Sigmoid colon (tissue), 7 donors: ENCODE measurements at regions of chr18 and their contacts with region 1.

Region 1: DNA sequence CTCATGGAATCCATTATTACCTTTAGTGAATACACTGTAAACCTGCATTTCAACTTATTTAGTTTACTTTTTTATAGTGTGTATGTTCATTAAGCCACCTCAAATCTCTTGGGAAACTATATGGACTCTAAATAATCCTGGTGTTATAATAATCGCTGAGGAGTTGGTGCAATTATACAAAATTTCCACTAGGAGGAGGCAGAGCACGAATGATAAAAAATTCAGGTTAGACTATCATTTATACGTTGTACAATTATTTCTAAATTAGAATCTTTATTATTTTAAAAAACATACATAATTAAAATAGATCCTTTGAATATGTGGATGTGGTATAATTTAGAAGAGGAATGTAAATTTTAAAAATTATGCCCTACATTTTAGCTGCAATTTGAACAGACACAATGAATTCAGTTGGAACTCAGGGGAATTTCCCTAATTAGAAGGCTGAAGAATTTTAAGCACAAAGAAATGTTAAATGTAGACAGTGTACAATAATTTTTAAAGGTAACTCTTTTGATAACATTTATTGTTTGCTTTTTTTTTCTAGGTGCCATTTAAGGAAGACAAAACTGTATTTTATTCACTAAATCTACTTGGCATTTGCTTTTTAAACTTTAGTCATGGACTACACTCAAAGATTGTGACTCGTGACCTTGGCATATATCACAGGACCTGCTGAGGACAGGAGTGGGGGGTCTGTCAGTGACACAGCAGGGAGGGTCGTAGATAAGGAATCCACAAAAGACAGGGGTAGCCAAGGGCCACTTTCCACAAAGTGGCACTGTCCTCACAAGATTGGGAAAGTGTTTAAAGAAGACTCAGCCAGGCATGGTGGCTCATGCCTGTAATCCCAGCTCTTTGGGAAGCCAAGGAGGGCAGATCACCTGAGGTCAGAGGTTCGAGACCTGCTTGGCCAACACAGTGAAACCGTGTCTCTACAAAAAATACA is 45.5 kb downstream of the RAB12 start:
- DNase-seq: no peak
- H3K4me3 ChIP-seq: no peak overlapping the region
- H3K27ac ChIP-seq: no peak overlapping the region
- H3K4me1 ChIP-seq: no peaks in the 10 kb centered on the region
- H3K27me3 ChIP-seq: no peaks in the 10 kb centered on the region
- CTCF ChIP-seq: peak; percentile 52 to 83 (median 80)
- EP300 ChIP-seq: no peak
- POLR2A ChIP-seq: no peak

Region 2: DNA sequence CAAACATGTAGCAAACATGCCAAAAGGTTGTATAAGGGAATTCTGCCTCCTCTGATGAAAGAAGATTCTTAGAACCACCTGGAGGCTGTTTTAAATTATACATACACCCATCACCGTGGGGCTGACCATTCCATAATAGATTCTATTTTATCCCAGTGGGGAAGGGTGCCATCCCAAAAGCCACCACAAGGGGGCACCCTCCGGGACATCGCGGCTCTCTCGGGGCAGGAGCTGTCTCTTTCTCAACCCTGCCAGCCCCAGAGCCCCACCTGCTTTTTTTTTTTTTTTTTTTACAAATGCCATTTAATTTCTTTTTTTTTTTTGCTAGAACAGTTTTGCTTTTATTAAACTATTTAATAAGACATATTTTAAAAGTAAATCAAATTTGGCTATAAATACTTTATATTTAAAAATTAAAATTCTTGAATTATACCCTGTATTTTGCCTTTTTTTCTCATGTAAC is 42.0 kb after region 1 on chr18:
- intact Hi-C with region 1: loop called (anchors 5 kb)
- DNase-seq: peak; percentile 88
- H3K4me3 ChIP-seq: no peak overlapping the region
- H3K27ac ChIP-seq: peak overlapping the region in 1 of 4 donors; percentile 9
- H3K4me1 ChIP-seq: peaks cover 0 to 5% (median 4%) of the 10 kb centered on the region in 4 donors
- H3K27me3 ChIP-seq: no peaks in the 10 kb centered on the region
- CTCF ChIP-seq: peak; percentile 68 to 90 (median 83)
- EP300 ChIP-seq: no peak
- POLR2A ChIP-seq: no peak

Region 3: GRCh38 chr18:8794133-8794986 is 139.6 kb after region 1 on chr18:
- intact Hi-C with region 1: no loop called
- DNase-seq: no peak
- H3K4me3 ChIP-seq: no peak overlapping the region
- H3K27ac ChIP-seq: peak overlapping the region in 3 of 4 donors; percentile 80 to 93 (median 82)
- H3K4me1 ChIP-seq: peaks cover 0 to 75% (median 53%) of the 10 kb centered on the region in 4 donors
- H3K27me3 ChIP-seq: no peaks in the 10 kb centered on the region
- CTCF ChIP-seq: no peak
- EP300 ChIP-seq: no peak
- POLR2A ChIP-seq: no peak

Region 4: DNA sequence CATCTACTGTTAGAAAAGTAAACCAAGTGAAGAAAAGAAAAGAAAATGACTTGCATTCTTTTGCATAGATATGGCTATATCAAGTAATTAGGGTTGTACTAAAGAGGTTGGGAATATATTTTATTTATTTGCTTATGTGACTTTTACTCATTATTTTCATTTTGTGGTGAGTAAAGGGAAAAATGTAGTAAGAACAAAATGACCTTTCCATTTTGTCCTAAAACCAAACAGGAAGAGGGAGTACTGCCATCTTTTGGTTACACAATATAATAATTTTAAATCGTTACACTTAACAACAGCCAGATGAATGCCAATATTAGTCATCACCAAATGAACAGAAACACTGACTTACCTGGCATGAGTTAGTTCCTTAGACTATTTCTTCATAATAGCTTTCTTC is 400.4 kb after region 1 on chr18:
- intact Hi-C with region 1: loop called (anchors 5 kb)
- DNase-seq: no peak
- H3K4me3 ChIP-seq: no peak overlapping the region
- H3K27ac ChIP-seq: peak overlapping the region in 1 of 4 donors; percentile 10
- H3K4me1 ChIP-seq: peaks cover 0 to 12% (median 3%) of the 10 kb centered on the region in 4 donors
- H3K27me3 ChIP-seq: no peaks in the 10 kb centered on the region
- CTCF ChIP-seq: peak in 2 of 4 experiments; percentile 27 to 39
- EP300 ChIP-seq: no peak
- POLR2A ChIP-seq: no peak